ENCODE measurements at regions of chr15 and their contacts with region 1.

Region 1: GRCh38 chr15:34969340-34970097 is at the start of gene AQR:
- DNase-seq: peak; percentile 92
- H3K4me3 Mint-ChIP-seq: peak within 1 kb of the TSS; percentile 91
- H3K27ac Mint-ChIP-seq: peak within 1 kb of the TSS; percentile 81
- H3K4me1 Mint-ChIP-seq: peaks cover 33% of the 10 kb centered on the region
- H3K27me3 Mint-ChIP-seq: no peaks in the 10 kb centered on the region
- total RNA-seq, gene AQR: 30.3 to 31.9 TPM

Region 2: GRCh38 chr15:34987985-34988873 is 18.7 kb after region 1 on chr15 and contains the start of gene ZNF770:
- CTCF ChIA-PET with region 1: interaction called, 54 read pairs
- POLR2A ChIA-PET with region 1: interaction called, 193 read pairs
- DNase-seq: peak; percentile 85
- H3K4me3 Mint-ChIP-seq: peak within 1 kb of the TSS; percentile 97
- H3K27ac Mint-ChIP-seq: peak within 1 kb of the TSS; percentile 96
- H3K4me1 Mint-ChIP-seq: peaks cover 52% of the 10 kb centered on the region
- H3K27me3 Mint-ChIP-seq: peaks cover 3% of the 10 kb centered on the region
- total RNA-seq, gene ZNF770: 36.2 to 40.8 TPM

Region 3: GRCh38 chr15:34993877-34994276 is 24.4 kb after region 1 on chr15:
- CTCF ChIA-PET with region 1: interaction called, 54 read pairs
- POLR2A ChIA-PET with region 1: interaction called, 193 read pairs
- DNase-seq: peak; percentile 50
- H3K4me3 Mint-ChIP-seq: peak overlapping the region; percentile 35
- H3K27ac Mint-ChIP-seq: peak overlapping the region; percentile 93
- H3K4me1 Mint-ChIP-seq: peaks cover 44% of the 10 kb centered on the region
- H3K27me3 Mint-ChIP-seq: peaks cover 18% of the 10 kb centered on the region

Measured in activated CD4-positive, alpha-beta memory T cell treated with anti-CD3 and anti-CD28 coated beads, Interleukin-2, amount 10 ng/mL, durations not matched to agents 7 days and 5 days (primary cell).